ENCODE measurements at regions of chr16 and their contacts with region 1.

Region 1: GRCh38 chr16:22077700-22078313 is 14.5 kb upstream of the VWA3A start:
- DNase-seq: peak; percentile 69
- H3K4me3 ChIP-seq: no peak overlapping the region; a peak in 1 of 4 replicates
- H3K27ac ChIP-seq: no peak overlapping the region
- H3K4me1 ChIP-seq: no peaks in the 10 kb centered on the region
- H3K27me3 ChIP-seq: no peaks in the 10 kb centered on the region
- CTCF ChIP-seq: peak; percentile 94
- EP300 ChIP-seq: no peak
- RAD21 ChIP-seq: peak; percentile 83

Region 2: GRCh38 chr16:21952793-21953540 is 124.8 kb before region 1 on chr16 and contains the start of gene UQCRC2:
- CTCF ChIA-PET with region 1: interaction called, 16 read pairs
- POLR2A ChIA-PET with region 1: no interaction called
- DNase-seq: peak; percentile 86
- H3K4me3 ChIP-seq: peak within 1 kb of the TSS; percentile 95 to 97
- H3K27ac ChIP-seq: peak within 1 kb of the TSS; percentile 84 to 97
- H3K4me1 ChIP-seq: peaks cover 11 to 15% of the 10 kb centered on the region in 2 experiments; a peak in 3 of 4 replicates
- H3K27me3 ChIP-seq: no peaks in the 10 kb centered on the region
- CTCF ChIP-seq: no peak
- EP300 ChIP-seq: peak in 1 of 2 experiments; percentile 57; a peak in 1 of 4 replicates
- RAD21 ChIP-seq: no peak
- polyA plus RNA-seq, gene UQCRC2: 155 and 220 TPM in 2 replicates

Region 3: GRCh38 chr16:22007509-22008214 is 70.1 kb before region 1 on chr16 and contains the start of gene MOSMO:
- CTCF ChIA-PET with region 1: interaction called, 95 read pairs
- POLR2A ChIA-PET with region 1: interaction called, 7 read pairs
- DNase-seq: peak; percentile 94
- H3K4me3 ChIP-seq: peak within 1 kb of the TSS; percentile 96 to 98
- H3K27ac ChIP-seq: peak within 1 kb of the TSS; percentile 62 to 90; a peak in 3 of 4 replicates
- H3K4me1 ChIP-seq: peaks cover 0 to 13% of the 10 kb centered on the region in 2 experiments; a peak in 1 of 4 replicates
- H3K27me3 ChIP-seq: no peaks in the 10 kb centered on the region
- CTCF ChIP-seq: no peak
- EP300 ChIP-seq: no peak
- RAD21 ChIP-seq: no peak
- polyA plus RNA-seq, gene MOSMO: 8.0 and 10.0 TPM in 2 replicates

Region 4: DNA sequence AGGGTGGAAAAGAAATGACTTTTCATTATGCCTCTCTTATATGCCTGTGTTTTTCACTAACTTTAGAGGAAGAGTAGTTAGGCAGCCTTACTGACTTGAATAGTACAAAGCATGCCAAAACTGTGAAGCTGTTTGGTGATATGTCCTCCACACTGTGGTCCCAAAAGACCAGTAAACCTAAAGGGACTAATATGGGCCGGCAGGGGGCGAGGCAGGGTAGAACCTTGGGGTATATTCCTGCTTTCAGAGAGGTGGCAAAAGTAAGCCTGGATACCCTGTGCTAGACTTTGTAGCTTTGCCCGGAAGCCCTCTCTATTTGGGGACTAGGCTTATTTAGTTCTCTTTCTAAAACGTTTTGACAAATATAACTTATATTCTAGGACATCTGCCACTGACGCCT is 21.9 kb before region 1 on chr16:
- CTCF ChIA-PET with region 1: interaction called, 44 read pairs
- POLR2A ChIA-PET with region 1: no interaction called
- DNase-seq: no peak
- H3K4me3 ChIP-seq: no peak overlapping the region
- H3K27ac ChIP-seq: no peak overlapping the region
- H3K4me1 ChIP-seq: no peaks in the 10 kb centered on the region
- H3K27me3 ChIP-seq: no peaks in the 10 kb centered on the region
- CTCF ChIP-seq: no peak
- EP300 ChIP-seq: no peak
- RAD21 ChIP-seq: no peak

Region 5: DNA sequence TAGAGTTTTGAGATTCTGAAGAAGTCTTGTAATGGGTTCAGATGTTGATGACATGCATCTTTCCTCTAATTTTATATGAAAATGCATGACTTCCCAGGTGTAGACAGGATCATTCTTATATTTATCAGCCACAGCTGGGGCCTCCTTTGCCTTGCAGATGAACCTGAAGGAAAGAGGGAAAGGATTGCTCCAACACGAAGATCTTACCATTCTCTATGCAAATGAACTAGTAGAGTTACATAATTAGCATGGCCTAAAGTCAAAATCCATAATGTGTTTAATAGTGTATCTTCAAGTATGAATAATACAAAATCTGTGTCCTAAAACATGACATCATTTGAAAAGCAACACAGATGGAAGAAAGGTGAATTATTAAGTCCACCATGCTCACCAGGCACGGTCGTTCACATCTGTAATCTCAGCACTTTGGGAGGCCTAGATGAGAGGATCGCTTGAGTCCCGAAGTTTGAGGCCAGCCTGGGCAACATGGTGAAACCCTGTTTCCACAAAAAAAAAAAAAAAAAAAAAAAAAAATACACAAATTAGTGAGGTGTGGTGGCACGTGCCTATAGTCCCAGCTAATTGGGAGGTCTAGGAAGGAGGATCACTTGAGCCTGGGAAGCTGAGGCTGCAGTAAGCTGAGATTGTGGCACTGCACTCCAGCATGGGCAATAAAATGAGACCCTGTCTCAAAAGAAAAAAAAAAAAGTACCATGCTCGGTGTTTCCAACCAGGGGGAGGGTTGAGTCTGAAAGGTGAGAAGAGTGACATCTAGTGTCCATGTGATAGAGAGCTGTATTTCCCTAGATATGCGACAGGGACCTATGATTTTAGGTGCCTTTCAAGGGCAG is 20.8 kb after region 1 on chr16:
- CTCF ChIA-PET with region 1: interaction called, 87 read pairs
- POLR2A ChIA-PET with region 1: no interaction called
- DNase-seq: peak; percentile 71
- H3K4me3 ChIP-seq: no peak overlapping the region; a peak in 1 of 4 replicates
- H3K27ac ChIP-seq: no peak overlapping the region
- H3K4me1 ChIP-seq: no peaks in the 10 kb centered on the region; a peak in 1 of 4 replicates
- H3K27me3 ChIP-seq: no peaks in the 10 kb centered on the region; the same call in 1 of the 2 replicates
- CTCF ChIP-seq: peak; percentile 66
- EP300 ChIP-seq: no peak
- RAD21 ChIP-seq: peak; percentile 75

Measured in SK-N-SH (cell line).